SK-N-SH (cell line): ENCODE measurements at regions of chr22 and their contacts with region 1.

Region 1: DNA sequence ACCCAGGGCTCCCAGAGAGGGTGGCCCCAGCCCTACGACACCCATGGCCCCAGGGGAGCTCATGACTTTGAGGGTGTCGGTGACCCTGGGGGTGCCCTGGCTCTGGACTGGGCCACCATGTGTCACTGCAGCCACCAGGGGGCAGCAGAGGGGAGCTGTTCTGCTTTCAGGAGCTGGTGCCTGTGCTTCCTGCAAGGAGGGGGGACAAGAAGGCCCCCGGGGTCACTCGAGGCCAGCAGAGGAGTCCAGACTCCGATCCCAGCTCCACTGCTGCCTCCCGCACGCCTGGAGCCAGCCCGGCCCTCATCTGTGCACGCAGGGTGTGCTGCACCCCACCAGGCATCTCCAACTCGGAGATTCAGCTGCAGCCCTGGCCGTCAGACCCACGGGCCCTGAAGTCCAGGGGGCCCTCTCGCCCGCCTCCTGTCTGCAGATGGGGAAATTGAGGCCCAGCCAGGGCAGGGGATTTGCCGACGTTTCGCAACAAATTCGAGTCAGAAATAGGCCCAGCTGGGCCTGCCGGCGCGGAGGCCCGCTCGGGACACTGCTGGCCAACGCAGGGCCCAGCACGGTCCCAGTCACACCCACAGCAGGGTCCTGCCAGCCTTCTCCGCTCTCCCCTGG is 29.5 kb upstream of the WNT7B start:
- DNase-seq: peak; percentile 96
- H3K4me3 ChIP-seq: peak overlapping the region; percentile 13 to 54; a peak in 2 of 4 replicates
- H3K27ac ChIP-seq: peak overlapping the region; percentile 99 to 100
- H3K4me1 ChIP-seq: peaks cover 46 to 57% of the 10 kb centered on the region in 2 experiments; a peak in 3 of 4 replicates
- H3K27me3 ChIP-seq: no peaks in the 10 kb centered on the region
- CTCF ChIP-seq: peak; percentile 94
- EP300 ChIP-seq: peak in 1 of 2 experiments; percentile 53; a peak in 2 of 4 replicates
- RAD21 ChIP-seq: peak; percentile 86

Region 2: GRCh38 chr22:45948081-45948648 is 58.3 kb before region 1 on chr22:
- CTCF ChIA-PET with region 1: no interaction called
- POLR2A ChIA-PET with region 1: no interaction called
- DNase-seq: peak; percentile 63
- H3K4me3 ChIP-seq: no peak overlapping the region
- H3K27ac ChIP-seq: no peak overlapping the region
- H3K4me1 ChIP-seq: no peaks in the 10 kb centered on the region
- H3K27me3 ChIP-seq: no peaks in the 10 kb centered on the region
- CTCF ChIP-seq: no peak
- EP300 ChIP-seq: no peak
- RAD21 ChIP-seq: no peak

Region 3: DNA sequence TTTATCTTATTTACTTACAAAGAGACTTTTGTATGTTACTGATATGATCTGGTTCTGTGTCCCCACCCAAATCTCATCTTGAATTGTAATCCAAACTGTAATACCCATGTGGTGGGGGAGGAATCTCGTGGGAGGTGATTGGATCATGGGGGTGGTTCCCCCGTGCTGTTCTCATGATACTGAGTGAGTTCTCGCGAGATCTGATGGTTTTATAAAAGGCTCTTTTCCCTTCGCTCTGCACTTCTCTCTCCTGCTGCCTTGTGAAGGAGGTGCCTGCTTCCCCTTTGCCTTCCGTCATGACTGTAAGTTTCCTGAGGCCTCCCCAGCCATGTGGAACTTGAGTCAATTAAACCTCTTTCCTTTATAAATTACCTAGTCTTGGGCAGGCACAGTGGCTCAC is 12.9 kb after region 1 on chr22:
- CTCF ChIA-PET with region 1: interaction called, 30 read pairs
- POLR2A ChIA-PET with region 1: no interaction called
- DNase-seq: no peak
- H3K4me3 ChIP-seq: no peak overlapping the region
- H3K27ac ChIP-seq: no peak overlapping the region
- H3K4me1 ChIP-seq: peaks cover 9 to 13% of the 10 kb centered on the region in 2 experiments
- H3K27me3 ChIP-seq: no peaks in the 10 kb centered on the region
- CTCF ChIP-seq: no peak
- EP300 ChIP-seq: no peak
- RAD21 ChIP-seq: no peak

Region 4: DNA sequence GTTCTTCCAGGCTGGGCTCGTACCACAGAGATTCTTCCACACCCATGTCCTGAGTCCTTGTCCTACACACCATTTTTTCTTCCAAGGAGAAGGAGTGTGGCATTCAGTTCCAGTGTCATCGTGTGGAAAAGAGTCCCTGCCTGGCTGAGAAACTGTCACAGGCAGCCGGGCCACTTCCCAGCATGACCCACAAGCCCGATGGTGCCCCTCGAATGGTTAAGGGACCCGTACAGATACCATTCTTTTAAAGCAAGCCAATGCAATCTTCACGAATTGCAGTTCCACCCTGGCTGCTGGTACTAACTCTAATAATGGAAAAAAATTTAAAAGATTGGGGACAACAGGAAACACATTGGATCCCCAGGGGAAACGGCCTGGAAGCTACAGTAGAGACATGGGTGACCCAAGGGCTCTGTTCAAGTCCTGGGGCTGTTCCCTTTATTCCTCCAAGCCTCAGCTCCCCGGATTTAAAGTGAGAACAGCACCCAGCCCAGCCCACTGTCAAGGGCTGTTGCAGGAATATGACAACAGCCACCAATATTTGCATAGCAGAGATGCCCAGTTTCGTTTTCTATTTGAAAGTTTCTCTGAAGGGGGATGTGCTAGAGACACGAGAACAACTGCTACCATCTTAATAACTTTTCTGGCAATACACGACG is 51.4 kb after region 1 on chr22:
- CTCF ChIA-PET with region 1: interaction called, 76 read pairs
- POLR2A ChIA-PET with region 1: interaction called, 21 read pairs
- DNase-seq: peak; percentile 58
- H3K4me3 ChIP-seq: peak overlapping the region; percentile 67 to 68
- H3K27ac ChIP-seq: peak overlapping the region; percentile 94 to 100
- H3K4me1 ChIP-seq: peaks cover 42 to 66% of the 10 kb centered on the region in 2 experiments
- H3K27me3 ChIP-seq: no peaks in the 10 kb centered on the region
- CTCF ChIP-seq: no peak
- EP300 ChIP-seq: no peak
- RAD21 ChIP-seq: no peak

Region 5: DNA sequence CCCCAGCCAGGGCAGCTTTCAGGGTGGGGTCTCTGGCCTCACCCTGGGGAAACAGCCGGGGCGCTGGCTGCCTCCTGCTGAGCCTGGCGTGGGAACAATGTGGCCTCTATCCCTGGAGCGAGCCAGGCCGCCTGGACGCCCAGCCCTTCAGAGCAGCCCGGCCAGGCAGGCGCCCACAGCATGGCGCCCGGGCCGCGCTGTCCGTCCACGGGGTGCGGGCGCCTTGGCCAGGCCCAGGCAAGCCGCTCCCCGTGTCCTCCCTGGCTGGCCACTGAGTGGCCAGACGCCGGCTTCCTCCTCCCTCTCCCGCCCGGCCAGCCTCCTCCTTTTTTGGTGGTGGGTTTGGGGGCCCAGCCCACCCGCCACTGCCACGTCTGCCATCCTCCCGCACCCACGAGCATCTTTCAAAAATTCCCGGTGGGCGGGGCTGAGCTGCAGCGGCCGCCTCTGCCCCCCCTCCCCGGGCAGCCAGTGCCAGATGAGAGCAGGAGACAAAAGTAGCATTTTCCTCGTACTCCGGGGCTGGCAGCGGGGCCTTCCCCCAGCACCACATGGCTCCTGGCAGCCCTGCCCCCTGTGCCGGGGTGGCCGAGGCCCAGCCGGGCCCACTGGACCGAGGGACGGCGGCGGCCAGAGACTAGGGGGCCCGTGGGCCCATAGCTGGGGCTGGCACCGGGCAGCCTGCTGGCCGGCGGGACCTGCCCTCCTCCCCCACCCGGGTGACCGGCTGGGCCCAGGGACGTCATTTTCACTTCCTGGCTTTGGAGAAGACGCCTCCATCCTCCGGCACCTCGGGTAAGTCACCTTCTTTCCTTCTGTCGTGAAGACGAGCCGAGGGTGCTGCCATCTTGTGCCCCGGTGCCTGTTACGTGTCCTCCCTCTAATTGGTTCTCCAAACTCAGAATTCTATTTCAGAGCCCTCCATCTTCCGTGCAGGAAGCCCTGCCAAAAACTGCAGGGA is 73.7 kb after region 1 on chr22:
- CTCF ChIA-PET with region 1: interaction called, 39 read pairs
- POLR2A ChIA-PET with region 1: interaction called, 25 read pairs
- DNase-seq: peak; percentile 85
- H3K4me3 ChIP-seq: peak overlapping the region; percentile 90 to 92
- H3K27ac ChIP-seq: peak overlapping the region; percentile 96 to 100
- H3K4me1 ChIP-seq: peaks cover 11 to 66% of the 10 kb centered on the region in 2 experiments; a peak in 3 of 4 replicates
- H3K27me3 ChIP-seq: no peaks in the 10 kb centered on the region
- CTCF ChIP-seq: no peak
- EP300 ChIP-seq: peak in 1 of 2 experiments; percentile 31; a peak in 2 of 4 replicates
- RAD21 ChIP-seq: no peak

Region 6: DNA sequence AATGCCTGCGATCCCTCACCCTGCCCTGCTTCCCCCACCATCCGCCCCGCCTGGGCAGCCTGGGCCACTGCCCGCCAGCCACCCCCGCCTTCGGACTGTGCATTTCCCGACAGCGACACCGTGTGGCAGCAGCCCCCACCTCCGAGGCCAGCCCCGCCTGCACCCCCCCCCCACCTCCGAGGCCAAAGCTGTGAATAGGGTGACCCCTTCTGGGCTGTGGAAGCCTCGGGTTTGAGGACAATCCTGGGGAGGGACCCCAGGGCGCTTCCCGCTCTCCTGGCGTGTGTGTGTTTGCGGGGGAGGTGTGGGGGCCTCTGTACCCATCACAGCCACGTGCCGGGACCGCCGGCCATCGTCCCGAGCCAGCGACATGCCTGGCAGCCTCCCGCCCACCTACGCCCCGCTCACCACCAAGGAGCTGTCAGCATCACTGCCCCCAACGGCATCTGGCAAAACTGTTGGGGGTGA is 110.0 kb after region 1 on chr22:
- CTCF ChIA-PET with region 1: interaction called, 102 read pairs
- POLR2A ChIA-PET with region 1: interaction called, 11 read pairs
- DNase-seq: peak; percentile 99
- H3K4me3 ChIP-seq: peak overlapping the region in 1 of 2 experiments; percentile 47; a peak in 1 of 4 replicates
- H3K27ac ChIP-seq: peak overlapping the region; percentile 63 to 70
- H3K4me1 ChIP-seq: peaks cover 0 to 74% of the 10 kb centered on the region in 2 experiments; a peak in 2 of 4 replicates
- H3K27me3 ChIP-seq: no peaks in the 10 kb centered on the region
- CTCF ChIP-seq: peak; percentile 73
- EP300 ChIP-seq: no peak
- RAD21 ChIP-seq: peak; percentile 80